ENCODE measurements at regions of chr6 and their contacts with region 1.

Region 1: DNA sequence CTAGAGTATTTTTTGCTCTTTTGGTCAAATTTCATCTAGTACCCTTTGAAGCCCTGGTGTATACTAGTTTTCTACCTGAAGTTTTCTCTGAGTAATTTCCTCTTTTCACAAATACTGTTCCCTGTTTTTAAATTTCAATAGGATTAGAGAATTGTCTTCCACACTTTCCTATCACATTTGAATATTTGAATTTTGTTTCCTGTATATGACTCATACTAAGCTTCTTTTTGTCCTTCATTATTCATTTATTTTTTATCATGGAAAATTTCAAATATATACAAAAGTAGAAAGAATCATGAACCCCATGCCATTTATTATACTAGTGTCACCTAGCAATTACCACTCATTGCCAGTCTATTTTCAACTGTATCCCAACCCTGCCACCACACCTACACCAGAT is 52.7 kb downstream of the LHFPL5 start:
- DNase-seq: no peak

Region 2: GRCh38 chr6:35797837-35798526 is 59.9 kb before region 1 on chr6:
- in situ Hi-C with region 1: loop called (anchors 5 kb)
- DNase-seq: no peak

Region 3: DNA sequence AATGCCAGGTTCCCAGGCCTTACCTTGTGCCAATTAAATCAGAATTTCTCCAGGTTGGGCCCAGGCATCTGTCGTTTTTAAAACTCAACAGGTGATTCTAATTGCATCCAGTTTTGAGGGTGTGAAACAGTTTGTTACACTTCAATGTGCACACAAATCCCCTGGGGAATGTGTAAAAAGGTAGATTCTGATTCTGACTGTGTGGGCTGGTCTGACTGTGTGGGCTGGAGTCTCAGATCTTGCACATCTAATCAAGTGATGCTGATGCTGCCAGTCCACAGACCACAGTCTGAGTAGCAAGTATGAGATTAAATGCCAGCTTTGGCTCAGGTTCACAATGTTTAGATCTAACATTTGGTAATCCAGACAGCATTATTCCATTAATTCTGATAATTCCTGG is 542.1 kb after region 1 on chr6:
- in situ Hi-C with region 1: no loop called
- DNase-seq: no peak

Measured in G401 (cell line).